ENCODE measurements at regions of chr12 and their contacts with region 1.

Region 1: GRCh38 chr12:120150919-120151525 is 34.5 kb upstream of the RAB35 start:
- DNase-seq: no peak
- H3K4me3 ChIP-seq: no peak overlapping the region
- H3K27ac ChIP-seq: no peak overlapping the region
- H3K4me1 ChIP-seq: no peaks in the 10 kb centered on the region
- H3K27me3 ChIP-seq: no peaks in the 10 kb centered on the region
- CTCF ChIP-seq: no peak
- EP300 ChIP-seq: no peak
- POLR2A ChIP-seq: no peak
- RAD21 ChIP-seq: no peak

Region 2: GRCh38 chr12:120167529-120168095 is 16.6 kb after region 1 on chr12:
- CTCF ChIA-PET with region 1: no interaction called
- POLR2A ChIA-PET with region 1: interaction called, 82 read pairs
- DNase-seq: no peak
- H3K4me3 ChIP-seq: no peak overlapping the region
- H3K27ac ChIP-seq: no peak overlapping the region
- H3K4me1 ChIP-seq: no peaks in the 10 kb centered on the region
- H3K27me3 ChIP-seq: no peaks in the 10 kb centered on the region
- CTCF ChIP-seq: no peak
- EP300 ChIP-seq: no peak
- POLR2A ChIP-seq: no peak
- RAD21 ChIP-seq: no peak

Region 3: DNA sequence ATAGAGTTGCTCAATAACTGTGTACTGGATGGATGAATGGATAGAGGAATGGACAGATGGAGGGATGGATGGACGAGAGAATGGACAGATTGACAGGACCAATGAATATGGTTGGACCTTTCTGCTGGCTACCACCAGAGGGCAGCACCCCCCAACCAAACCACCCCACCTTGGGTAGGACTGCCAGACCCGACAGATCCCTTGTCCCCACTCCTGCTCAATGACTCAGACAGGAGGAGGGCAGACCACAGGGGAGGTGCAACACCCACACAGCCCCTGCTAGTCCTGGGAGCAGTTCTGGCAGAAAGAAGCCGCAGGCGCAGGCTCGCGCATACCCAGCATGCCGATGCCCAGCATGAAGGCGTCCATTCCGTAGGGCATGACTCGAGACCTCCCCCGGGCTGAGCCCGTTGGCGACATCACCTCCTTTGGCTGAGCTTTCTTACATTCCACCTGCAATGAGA is 205.6 kb after region 1 on chr12:
- CTCF ChIA-PET with region 1: no interaction called
- POLR2A ChIA-PET with region 1: no interaction called
- DNase-seq: peak; percentile 80 to 90
- H3K4me3 ChIP-seq: no peak overlapping the region
- H3K27ac ChIP-seq: no peak overlapping the region
- H3K4me1 ChIP-seq: peaks cover 8 to 16% (median 13%) of the 10 kb centered on the region in 4 experiments
- H3K27me3 ChIP-seq: no peaks in the 10 kb centered on the region
- CTCF ChIP-seq: peak; percentile 91 to 94 (median 93)
- EP300 ChIP-seq: no peak
- POLR2A ChIP-seq: no peak
- RAD21 ChIP-seq: peak; percentile 93 to 96

Measured in H1 (cell line).